Aorta (tissue), 5 donors: ENCODE measurements at regions of chr12 and their contacts with region 1.

Region 1: DNA sequence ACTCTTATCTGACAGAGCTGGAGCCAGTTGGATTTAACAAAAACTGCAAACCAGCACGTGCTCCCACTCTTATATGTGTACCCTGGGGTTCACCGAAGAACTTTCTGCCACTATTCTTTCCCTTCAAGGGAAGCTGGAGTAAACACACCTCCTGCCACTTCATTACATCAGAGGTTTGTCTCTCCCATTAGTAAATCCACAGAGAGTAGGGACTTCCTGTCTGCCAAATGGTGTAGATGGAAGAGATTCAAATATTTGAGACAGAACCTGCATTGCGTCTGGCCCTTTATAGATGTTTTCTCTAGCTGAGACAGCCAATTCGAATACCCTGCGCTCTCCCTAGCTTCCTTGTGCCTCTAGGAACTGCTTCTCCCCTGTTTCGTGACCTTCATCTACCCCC is 29.1 kb upstream of the AEBP2 start:
- DNase-seq: no peak
- ATAC-seq: no peak
- H3K4me3 ChIP-seq: no peak overlapping the region
- H3K27ac ChIP-seq: peak overlapping the region; percentile 72 to 95
- H3K4me1 ChIP-seq: peaks cover 2 to 12% of the 10 kb centered on the region in 2 donors
- H3K27me3 ChIP-seq: no peaks in the 10 kb centered on the region

Region 2: GRCh38 chr12:19369691-19370148 is 40.5 kb before region 1 on chr12:
- intact Hi-C with region 1: loop called in 1 of 2 experiments (anchors 5 kb)
- DNase-seq: no peak
- ATAC-seq: peak; percentile 62
- H3K4me3 ChIP-seq: no peak overlapping the region
- H3K27ac ChIP-seq: peak overlapping the region; percentile 9 to 64
- H3K4me1 ChIP-seq: no peaks in the 10 kb centered on the region
- H3K27me3 ChIP-seq: no peaks in the 10 kb centered on the region

Region 3: DNA sequence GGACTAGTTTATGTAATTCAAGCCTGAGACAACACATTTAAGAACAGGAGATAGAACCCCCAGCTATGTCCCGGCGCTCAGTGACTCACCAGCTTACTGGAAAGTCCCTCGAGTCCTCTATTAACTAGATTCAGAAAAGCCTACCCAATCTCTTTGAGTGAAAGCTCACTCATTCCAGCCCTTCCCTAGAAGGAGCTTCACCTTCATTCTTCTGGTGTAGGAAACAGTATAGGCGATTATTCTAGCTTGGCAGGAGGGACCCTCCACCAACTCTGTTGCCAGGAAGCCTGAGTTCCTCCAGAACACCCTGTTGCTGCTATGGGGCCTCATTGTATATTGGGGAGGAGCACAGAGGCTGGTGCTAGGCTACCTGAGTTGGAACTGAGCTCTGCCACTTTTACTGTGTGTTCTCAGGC is 28.1 kb before region 1 on chr12:
- intact Hi-C with region 1: no loop called
- DNase-seq: peak in 1 of 2 donors; percentile 56
- ATAC-seq: no peak
- H3K4me3 ChIP-seq: no peak overlapping the region
- H3K27ac ChIP-seq: no peak overlapping the region
- H3K4me1 ChIP-seq: peaks cover 0 to 3% of the 10 kb centered on the region in 2 donors
- H3K27me3 ChIP-seq: no peaks in the 10 kb centered on the region

Region 4: DNA sequence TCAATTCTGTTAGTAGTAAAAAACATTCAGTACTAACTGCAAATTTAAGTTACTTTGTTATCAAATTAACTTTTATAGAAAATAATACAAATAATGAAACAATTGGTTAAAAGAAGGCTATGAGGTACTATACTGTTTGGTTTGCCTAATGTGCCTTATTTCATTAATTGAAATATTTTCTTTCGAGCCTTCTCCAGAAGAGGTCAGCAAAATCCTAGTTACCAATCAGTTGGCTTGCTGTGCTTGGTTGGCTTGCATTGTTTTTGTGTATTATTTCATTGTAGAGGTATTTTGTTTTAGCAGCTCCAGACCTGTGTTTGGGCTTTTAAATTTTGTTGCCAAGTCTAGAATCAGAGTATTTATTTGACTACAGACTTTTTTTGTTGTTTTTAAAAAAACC is 97.6 kb after region 1 on chr12:
- intact Hi-C with region 1: no loop called
- DNase-seq: no peak
- ATAC-seq: peak; percentile 65
- H3K4me3 ChIP-seq: no peak overlapping the region
- H3K27ac ChIP-seq: no peak overlapping the region
- H3K4me1 ChIP-seq: peaks cover 5 to 6% of the 10 kb centered on the region in 2 donors
- H3K27me3 ChIP-seq: no peaks in the 10 kb centered on the region